Activated T-helper 1 cell treated with anti-CD3 and anti-CD28 coated beads, Interleukin-12 subunit alpha, Interleukin-12 subunit beta, Interleukin-2, Interleukin-4 antibody, amounts not matched to agents 30 ng/mL and 10 ng/mL and 1 ng/mL, durations not matched to agents 14 hours and 24 hours and 36 hours (primary cell): ENCODE measurements at regions of chr22 and their contacts with region 1.

Region 1: DNA sequence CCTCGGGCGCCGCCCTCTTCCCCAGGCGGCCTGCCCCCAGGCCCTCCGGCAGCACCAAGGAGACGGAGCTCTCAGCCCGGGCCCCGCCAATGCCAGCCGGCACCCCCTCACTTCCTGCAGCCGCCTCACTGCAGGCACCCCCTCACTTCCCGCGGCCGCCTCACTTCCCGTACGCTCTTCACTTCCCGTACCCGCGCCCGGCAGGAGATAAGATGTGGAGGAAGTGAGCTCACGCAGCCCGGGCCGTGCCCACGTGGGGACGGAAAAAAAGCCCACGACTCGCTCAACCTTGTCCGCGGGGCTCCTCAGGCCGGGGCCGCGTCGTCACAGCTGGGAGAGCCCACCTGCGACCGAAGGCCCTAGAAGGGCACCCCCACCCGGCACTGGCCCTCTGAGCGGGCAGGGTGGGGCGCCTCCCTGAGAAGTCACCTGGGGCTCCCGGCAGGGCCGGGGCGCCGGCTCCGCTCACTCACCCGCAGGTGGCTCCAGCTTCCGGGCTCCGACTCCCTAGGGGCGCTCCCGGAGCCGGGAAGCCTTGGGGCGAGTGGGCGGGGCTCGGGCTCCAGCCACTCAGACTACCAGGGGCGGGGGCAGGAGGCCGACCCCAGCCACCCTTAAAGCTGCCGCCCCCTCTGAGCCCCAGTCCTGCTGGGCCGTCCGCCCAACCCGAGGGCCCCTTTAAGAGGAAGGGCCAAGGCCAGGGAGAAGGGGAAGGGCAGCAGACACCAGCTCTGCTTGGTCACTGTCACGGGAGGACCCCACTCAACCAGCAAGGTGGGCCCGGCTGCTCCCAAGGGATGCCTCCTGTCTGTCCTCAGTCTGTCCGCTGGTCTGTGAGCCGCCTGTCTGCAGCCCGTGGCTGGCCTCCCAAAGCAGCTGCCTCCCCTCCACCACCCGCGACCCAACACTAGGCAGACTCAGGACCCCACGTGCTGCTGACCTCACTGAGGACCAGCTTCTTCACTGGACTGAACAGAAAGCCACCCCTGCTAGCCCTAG is 31.4 kb downstream of the PISD start:
- DNase-seq: peak; percentile 82
- H3K4me3 Mint-ChIP-seq: peak overlapping the region; percentile 87
- H3K27ac Mint-ChIP-seq: peak overlapping the region; percentile 88
- H3K4me1 Mint-ChIP-seq: peaks cover 54% of the 10 kb centered on the region
- H3K27me3 Mint-ChIP-seq: no peaks in the 10 kb centered on the region

Region 2: GRCh38 chr22:31345331-31346254 is 285.0 kb before region 1 on chr22:
- intact Hi-C with region 1: loop called (anchors 1 kb)
- DNase-seq: peak; percentile 85
- H3K4me3 Mint-ChIP-seq: peak overlapping the region; percentile 87
- H3K27ac Mint-ChIP-seq: peak overlapping the region; percentile 89
- H3K4me1 Mint-ChIP-seq: peaks cover 48% of the 10 kb centered on the region
- H3K27me3 Mint-ChIP-seq: no peaks in the 10 kb centered on the region

Region 3: GRCh38 chr22:31399211-31400028 is 231.2 kb before region 1 on chr22 and contains the start of gene DRG1:
- intact Hi-C with region 1: loop called (anchors 1 kb)
- DNase-seq: peak; percentile 97
- H3K4me3 Mint-ChIP-seq: peak within 1 kb of the TSS; percentile 100
- H3K27ac Mint-ChIP-seq: peak within 1 kb of the TSS; percentile 93
- H3K4me1 Mint-ChIP-seq: peaks cover 13% of the 10 kb centered on the region
- H3K27me3 Mint-ChIP-seq: peaks cover 2% of the 10 kb centered on the region
- total RNA-seq, gene DRG1: 113 and 125 TPM in 2 replicates

Region 4: GRCh38 chr22:31451709-31452571 is 178.7 kb before region 1 on chr22:
- intact Hi-C with region 1: loop called (anchors 1 kb)
- DNase-seq: peak; percentile 6
- H3K4me3 Mint-ChIP-seq: no peak overlapping the region
- H3K27ac Mint-ChIP-seq: peak overlapping the region; percentile 27
- H3K4me1 Mint-ChIP-seq: no peaks in the 10 kb centered on the region
- H3K27me3 Mint-ChIP-seq: no peaks in the 10 kb centered on the region

Region 5: DNA sequence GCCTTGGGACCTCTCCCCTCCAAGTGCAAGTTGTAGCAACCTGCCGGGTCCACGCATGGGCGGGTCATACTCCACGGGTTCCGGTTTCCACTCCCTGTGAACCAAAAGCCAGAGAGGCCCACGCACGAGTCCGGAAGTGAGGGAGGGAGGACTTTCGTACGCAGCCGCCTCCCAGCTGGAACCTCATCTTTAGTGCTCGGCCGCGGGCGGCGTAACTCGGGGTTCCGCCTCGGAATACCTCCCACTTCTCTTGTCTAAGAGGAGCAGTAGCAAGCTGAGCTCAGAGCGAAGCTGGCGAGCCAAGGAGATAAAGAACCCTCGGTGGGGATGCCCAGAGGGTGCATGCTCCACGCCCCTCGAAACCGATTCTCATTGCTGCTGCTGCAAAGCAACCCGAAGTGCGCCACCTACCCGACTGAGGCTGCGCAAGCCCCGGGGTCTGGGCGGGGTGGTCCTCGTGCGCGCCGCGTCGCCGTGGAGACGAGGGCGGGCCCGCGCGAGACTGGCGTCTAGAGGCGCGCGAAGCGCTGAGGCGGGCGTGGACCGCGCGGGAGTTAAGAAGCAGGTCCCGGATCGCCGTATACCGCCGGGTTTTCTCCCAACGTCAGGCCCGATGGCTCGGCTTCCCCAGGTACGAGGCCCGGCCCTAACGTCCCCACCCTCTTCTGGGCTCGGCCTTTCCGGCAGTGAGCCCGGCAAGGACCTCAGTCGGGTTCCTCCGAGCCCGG is 134.5 kb before region 1 on chr22 and contains the start of gene SFI1:
- intact Hi-C with region 1: loop called (anchors 1 kb)
- DNase-seq: peak; percentile 94
- H3K4me3 Mint-ChIP-seq: peak within 1 kb of the TSS; percentile 99
- H3K27ac Mint-ChIP-seq: peak within 1 kb of the TSS; percentile 99
- H3K4me1 Mint-ChIP-seq: peaks cover 40% of the 10 kb centered on the region
- H3K27me3 Mint-ChIP-seq: no peaks in the 10 kb centered on the region
- total RNA-seq, gene SFI1: 406 and 416 TPM in 2 replicates

Region 6: DNA sequence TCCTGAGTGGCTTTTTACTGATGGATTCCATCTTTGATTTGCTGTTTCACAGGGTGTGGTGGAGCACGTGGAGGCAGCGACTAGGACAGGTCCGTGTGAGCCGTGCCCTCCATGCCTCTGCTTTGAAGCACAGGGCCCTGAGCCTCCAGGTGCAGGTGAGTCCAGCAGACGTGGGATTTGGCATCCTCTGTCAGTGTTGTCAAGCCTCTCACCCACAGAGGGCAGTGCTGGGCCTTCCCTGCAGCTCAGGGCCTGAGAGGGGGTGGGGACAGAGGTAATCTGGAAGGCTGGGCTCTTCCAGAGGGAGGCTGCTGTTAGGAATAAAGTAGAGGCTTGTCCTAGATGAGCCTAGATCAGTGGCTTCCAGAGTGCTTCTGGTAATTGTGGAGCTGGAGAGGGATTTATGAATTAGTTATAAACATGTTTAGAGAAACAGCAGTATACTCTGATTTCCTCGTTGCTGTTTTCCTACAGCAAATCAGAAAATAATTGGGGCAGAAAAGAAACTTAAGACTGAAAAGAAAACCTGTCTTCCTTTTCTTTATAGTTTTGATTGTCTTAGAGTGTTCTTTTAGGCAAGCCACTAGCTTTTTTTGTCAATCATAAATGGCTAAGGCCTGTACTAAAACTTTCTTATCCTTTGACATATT is 69.3 kb before region 1 on chr22:
- intact Hi-C with region 1: loop called (anchors 1 kb)
- DNase-seq: peak; percentile 39
- H3K4me3 Mint-ChIP-seq: no peak overlapping the region
- H3K27ac Mint-ChIP-seq: peak overlapping the region; percentile 77
- H3K4me1 Mint-ChIP-seq: peaks cover 16% of the 10 kb centered on the region
- H3K27me3 Mint-ChIP-seq: no peaks in the 10 kb centered on the region